Panc1 (cell line): ENCODE measurements at regions of chr7 and their contacts with region 1.

Region 1: DNA sequence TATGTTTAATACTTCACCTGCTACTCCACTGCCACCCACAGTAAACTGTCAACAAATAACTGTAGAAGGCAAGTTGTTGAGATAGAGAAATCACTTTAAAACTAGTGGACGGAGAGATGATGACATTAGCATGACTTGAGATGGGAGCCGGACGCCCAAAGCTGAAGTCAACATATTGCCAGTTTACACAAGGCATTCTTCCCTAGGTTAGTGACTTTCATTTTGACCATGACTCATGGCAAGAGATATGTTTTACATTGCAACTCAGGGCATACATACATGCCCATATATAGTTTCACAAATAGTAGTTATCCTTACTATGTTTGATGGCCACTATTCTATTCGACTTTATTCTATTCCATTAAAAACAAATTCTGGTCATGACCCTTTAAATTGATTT is 296.6 kb downstream of the PLXNA4 start:
- DNase-seq: no peak
- ATAC-seq: no peak
- H3K4me3 ChIP-seq: no peak overlapping the region
- H3K27ac ChIP-seq: no peak overlapping the region
- H3K4me1 ChIP-seq: no peaks in the 10 kb centered on the region
- H3K27me3 ChIP-seq: peaks cover 2% of the 10 kb centered on the region; the same call in 1 of the 2 replicates
- CTCF ChIP-seq: no peak

Region 2: GRCh38 chr7:133191787-133192186 is 912.1 kb after region 1 on chr7:
- CTCF ChIA-PET with region 1: no interaction called
- POLR2A ChIA-PET with region 1: no interaction called
- in situ Hi-C with region 1: no loop called
- intact Hi-C with region 1: no loop called
- DNase-seq: no peak
- ATAC-seq: no peak
- H3K4me3 ChIP-seq: no peak overlapping the region
- H3K27ac ChIP-seq: no peak overlapping the region
- H3K4me1 ChIP-seq: no peaks in the 10 kb centered on the region
- H3K27me3 ChIP-seq: peaks cover 3% of the 10 kb centered on the region; the same call in 1 of the 2 replicates
- CTCF ChIP-seq: no peak

Region 3: GRCh38 chr7:133482599-133482998 is 1202.9 kb after region 1 on chr7:
- CTCF ChIA-PET with region 1: interaction called, 14 read pairs
- POLR2A ChIA-PET with region 1: no interaction called
- in situ Hi-C with region 1: no loop called
- intact Hi-C with region 1: no loop called
- DNase-seq: no peak
- ATAC-seq: no peak
- H3K4me3 ChIP-seq: no peak overlapping the region
- H3K27ac ChIP-seq: no peak overlapping the region
- H3K4me1 ChIP-seq: no peaks in the 10 kb centered on the region
- H3K27me3 ChIP-seq: no peaks in the 10 kb centered on the region
- CTCF ChIP-seq: no peak